IMR-90 (cell line): ENCODE measurements at regions of chr1 and their contacts with region 1.

Region 1: GRCh38 chr1:109112652-109113285 is 1.1 kb upstream of the ELAPOR1 start:
- DNase-seq: peak; percentile 85
- ATAC-seq: peak; percentile 94
- H3K4me3 ChIP-seq: no peak overlapping the region
- H3K27ac ChIP-seq: no peak overlapping the region
- H3K4me1 ChIP-seq: peaks cover 2% of the 10 kb centered on the region; the same call in 1 of the 2 replicates
- H3K27me3 ChIP-seq: peaks cover 23% of the 10 kb centered on the region
- CTCF ChIP-seq: peak; percentile 91
- POLR2A ChIP-seq: no peak
- RAD21 ChIP-seq: peak; percentile 68

Region 2: GRCh38 chr1:108963052-108963686 is 149.6 kb before region 1 on chr1 and contains the start of gene CLCC1:
- CTCF ChIA-PET with region 1: no interaction called
- POLR2A ChIA-PET with region 1: no interaction called
- dilution Hi-C with region 1: no loop called
- in situ Hi-C with region 1: no loop called
- intact Hi-C with region 1: loop called (anchors 5 kb)
- DNase-seq: peak; percentile 90
- ATAC-seq: peak; percentile 99
- H3K4me3 ChIP-seq: peak within 1 kb of the TSS; percentile 100
- H3K27ac ChIP-seq: peak within 1 kb of the TSS; percentile 98
- H3K4me1 ChIP-seq: 0 out of 2 replicates have a peak, but pooled peaks cover 2% of the 10 kb centered on the region
- H3K27me3 ChIP-seq: no peaks in the 10 kb centered on the region
- CTCF ChIP-seq: no peak
- POLR2A ChIP-seq: peak; percentile 79; the same call in 1 of the 2 replicates
- RAD21 ChIP-seq: no peak
- total RNA-seq, gene CLCC1: 29.6 and 41.4 TPM in 2 replicates

Region 3: DNA sequence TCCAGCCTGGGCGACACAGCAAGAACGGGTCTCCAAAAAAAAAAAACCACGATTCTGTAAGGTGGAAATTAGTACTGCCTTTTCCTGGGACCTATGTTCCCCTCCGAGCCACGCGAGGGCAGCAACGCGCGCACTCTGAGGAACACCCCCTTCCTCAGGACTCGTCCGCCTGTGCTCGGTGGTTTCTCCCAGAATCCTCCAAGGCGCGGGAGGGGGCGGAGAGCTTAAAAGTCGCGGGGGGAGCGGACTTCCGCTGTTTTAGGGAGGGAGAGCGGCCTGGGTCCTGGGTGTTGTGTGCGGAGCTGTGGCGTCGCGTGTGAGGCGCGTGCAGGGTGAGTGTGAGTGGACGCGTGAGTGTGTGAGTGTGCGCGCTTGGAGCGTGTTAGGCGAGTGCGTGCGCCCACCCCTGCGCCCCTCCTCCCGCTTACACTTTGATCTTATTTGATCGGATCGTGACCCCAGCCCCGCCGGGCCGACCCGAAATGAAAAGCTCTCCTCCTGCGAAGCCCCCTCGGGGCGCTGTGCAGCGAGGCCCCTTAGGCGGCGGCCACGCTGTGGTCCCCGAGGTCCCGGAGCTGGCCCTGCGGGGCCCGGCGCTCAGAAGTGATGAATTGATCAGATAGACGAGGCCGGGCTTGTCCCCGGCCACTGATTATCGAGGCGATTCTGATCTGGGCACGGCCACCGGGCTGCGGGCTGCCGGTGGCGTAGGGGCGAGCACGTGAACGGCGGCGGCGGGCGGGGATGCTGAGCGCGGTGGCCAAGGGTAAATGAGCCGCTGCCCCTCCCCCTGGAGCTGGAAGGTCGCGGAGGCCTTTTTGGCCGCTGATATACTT is 12.6 kb before region 1 on chr1:
- CTCF ChIA-PET with region 1: interaction called, 13 read pairs
- POLR2A ChIA-PET with region 1: interaction called, 4 read pairs
- dilution Hi-C with region 1: no loop called
- in situ Hi-C with region 1: no loop called
- intact Hi-C with region 1: no loop called
- DNase-seq: peak; percentile 97
- ATAC-seq: peak; percentile 98
- H3K4me3 ChIP-seq: peak overlapping the region; percentile 77
- H3K27ac ChIP-seq: peak overlapping the region; percentile 89
- H3K4me1 ChIP-seq: no peaks in the 10 kb centered on the region
- H3K27me3 ChIP-seq: no peaks in the 10 kb centered on the region
- CTCF ChIP-seq: peak; percentile 91
- POLR2A ChIP-seq: peak; percentile 99
- RAD21 ChIP-seq: peak; percentile 58

Region 4: GRCh38 chr1:109213785-109214468 is 101.2 kb after region 1 on chr1 and contains the start of gene SARS1:
- CTCF ChIA-PET with region 1: no interaction called
- POLR2A ChIA-PET with region 1: no interaction called
- dilution Hi-C with region 1: no loop called
- in situ Hi-C with region 1: no loop called
- intact Hi-C with region 1: loop called (anchors 1 kb)
- DNase-seq: peak; percentile 80
- ATAC-seq: peak; percentile 90
- H3K4me3 ChIP-seq: peak within 1 kb of the TSS; percentile 73
- H3K27ac ChIP-seq: peak within 1 kb of the TSS; percentile 86
- H3K4me1 ChIP-seq: peaks cover 8% of the 10 kb centered on the region
- H3K27me3 ChIP-seq: no peaks in the 10 kb centered on the region
- CTCF ChIP-seq: no peak
- POLR2A ChIP-seq: peak; percentile 90
- RAD21 ChIP-seq: no peak; the same call in 1 of the 2 replicates
- total RNA-seq, gene SARS1: 348 and 373 TPM in 2 replicates

Region 5: DNA sequence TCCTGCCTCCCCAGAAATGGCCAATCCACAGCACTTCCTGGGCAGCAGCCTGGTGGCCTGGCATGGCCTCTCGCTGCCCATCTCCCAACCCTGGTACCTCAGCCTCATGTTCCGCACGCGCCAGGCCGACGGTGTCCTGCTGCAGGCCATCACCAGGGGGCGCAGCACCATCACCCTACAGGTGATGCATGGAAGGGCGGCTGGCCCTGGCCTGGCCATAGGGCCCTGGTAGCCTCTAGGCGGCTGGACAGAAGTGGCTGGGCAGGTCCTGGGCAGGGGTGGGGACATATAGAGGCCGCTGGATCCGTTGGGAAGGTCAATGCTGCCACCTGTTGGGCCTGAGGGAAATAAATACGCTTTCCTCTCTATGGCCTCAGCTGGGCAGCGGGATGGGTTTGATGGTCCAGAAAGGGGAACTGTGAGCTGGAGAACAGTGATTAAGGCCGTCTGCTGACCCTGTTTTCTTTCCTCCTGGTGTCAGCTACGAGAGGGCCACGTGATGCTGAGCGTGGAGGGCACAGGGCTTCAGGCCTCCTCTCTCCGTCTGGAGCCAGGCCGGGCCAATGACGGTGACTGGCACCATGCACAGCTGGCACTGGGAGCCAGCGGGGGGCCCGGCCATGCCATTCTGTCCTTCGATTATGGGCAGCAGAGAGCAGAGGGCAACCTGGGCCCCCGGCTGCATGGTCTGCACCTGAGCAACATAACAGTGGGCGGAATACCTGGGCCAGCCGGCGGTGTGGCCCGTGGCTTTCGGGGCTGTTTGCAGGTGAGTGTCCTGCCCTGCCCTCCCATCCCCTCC is 151.0 kb after region 1 on chr1:
- CTCF ChIA-PET with region 1: no interaction called
- POLR2A ChIA-PET with region 1: no interaction called
- dilution Hi-C with region 1: no loop called
- in situ Hi-C with region 1: no loop called
- intact Hi-C with region 1: loop called (anchors 1 kb)
- DNase-seq: peak; percentile 79
- ATAC-seq: peak; percentile 97
- H3K4me3 ChIP-seq: no peak overlapping the region
- H3K27ac ChIP-seq: no peak overlapping the region
- H3K4me1 ChIP-seq: no peaks in the 10 kb centered on the region
- H3K27me3 ChIP-seq: no peaks in the 10 kb centered on the region
- CTCF ChIP-seq: peak; percentile 99
- POLR2A ChIP-seq: no peak
- RAD21 ChIP-seq: peak; percentile 89